ENCODE measurements at regions of chr13 and their contacts with region 1.

Region 1: DNA sequence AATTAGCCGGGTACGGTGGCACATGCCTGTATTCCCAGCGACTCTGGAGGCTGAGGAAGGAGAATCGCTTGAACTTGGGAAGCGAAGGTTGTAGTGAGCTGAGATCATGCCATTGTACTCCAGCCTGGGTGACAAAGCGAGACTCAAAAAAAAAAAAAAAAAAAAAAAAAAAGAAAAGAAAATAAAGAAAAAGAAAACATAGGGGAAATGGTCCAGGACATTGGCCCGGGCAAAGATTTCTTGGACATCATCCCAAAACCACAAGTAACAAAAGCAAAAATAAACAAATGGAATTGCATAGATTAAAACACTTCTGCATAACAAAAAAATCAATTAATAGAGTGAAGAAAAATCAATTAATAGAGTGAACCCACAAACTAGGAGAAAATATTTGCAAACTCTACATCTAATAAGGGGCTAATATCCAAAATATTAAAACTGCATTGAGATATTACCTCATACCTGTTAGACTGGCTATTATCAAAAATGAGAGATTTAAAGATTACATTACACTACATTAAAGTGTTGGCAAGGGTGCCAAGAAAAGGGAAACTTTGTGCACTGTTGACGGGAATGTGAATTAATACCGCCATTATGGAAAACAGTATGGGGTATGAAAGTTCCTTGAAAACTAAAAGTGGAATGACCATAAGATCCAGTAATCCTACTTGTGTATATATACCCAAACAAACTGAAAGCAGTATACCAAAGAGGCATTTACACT is 18.5 kb upstream of the ABCC4 start:
- DNase-seq: no peak
- H3K4me3 ChIP-seq: no peak overlapping the region
- H3K27ac ChIP-seq: no peak overlapping the region
- H3K4me1 ChIP-seq: no peaks in the 10 kb centered on the region
- H3K27me3 ChIP-seq: no peaks in the 10 kb centered on the region
- CTCF ChIP-seq: no peak

Region 2: DNA sequence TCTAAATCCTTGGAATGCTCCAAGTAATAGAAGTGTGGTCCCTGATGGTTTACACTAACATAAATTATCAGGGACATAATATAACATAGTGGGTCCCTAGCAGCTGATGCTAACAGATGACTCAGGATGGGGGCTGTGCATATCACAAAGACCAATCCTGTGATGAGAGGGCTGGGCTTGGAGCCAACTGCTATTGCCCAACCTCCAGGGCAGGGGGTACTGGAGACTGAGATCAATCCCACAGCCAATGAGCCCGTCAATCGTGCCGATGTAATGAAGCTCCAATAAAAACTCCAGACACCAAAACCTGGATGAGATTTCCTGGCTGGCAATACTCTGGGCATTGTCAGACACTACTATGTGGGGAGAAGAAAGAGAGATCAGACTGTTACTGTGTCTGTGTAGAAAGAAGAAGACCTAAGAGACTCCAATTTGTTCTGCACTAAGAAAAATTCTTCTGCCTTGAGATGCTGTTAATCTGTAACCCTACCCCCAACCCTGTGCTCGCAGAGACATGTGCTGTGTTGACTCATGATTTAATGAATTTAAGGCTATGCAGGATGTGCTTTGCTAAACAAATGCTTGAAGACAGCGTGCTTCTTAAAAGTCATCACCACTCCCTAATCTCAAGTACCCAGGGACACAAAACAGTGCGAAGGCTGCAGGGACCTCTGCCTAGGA is 51.9 kb before region 1 on chr13:
- CTCF ChIA-PET with region 1: interaction called, 10 read pairs
- POLR2A ChIA-PET with region 1: no interaction called
- intact Hi-C with region 1: no loop called
- DNase-seq: peak; percentile 90
- H3K4me3 ChIP-seq: no peak overlapping the region
- H3K27ac ChIP-seq: peak overlapping the region; percentile 71
- H3K4me1 ChIP-seq: peaks cover 42% of the 10 kb centered on the region
- H3K27me3 ChIP-seq: no peaks in the 10 kb centered on the region
- CTCF ChIP-seq: no peak

Measured in A673 (cell line).